T-cell (primary cell): ENCODE measurements at regions of chr17 and their contacts with region 1.

Region 1: DNA sequence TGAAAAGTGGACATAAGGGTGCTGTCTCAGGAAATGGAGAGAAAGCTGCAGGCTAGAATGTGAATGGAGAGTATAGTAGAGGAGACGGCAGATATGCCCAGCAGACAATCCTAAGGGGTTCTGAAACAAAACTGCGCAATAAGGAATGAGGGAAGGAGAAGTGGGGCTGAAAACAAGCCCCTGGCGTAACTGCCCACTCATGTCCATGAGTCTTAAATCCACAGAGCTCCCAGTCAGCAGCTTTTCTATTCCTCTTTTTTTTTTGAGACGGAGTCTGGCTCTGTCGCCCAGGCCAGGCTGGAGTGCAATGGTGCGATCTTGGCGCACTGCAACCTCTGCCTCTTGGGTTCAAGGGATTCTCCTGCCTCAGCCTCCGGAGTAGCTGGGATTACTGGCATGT is 5.9 kb downstream of the STRADA start:
- DNase-seq: no peak
- ATAC-seq: no peak
- H3K4me3 ChIP-seq: no peak overlapping the region
- H3K4me3 Mint-ChIP-seq: no peak overlapping the region
- H3K27ac ChIP-seq: no peak overlapping the region
- H3K27ac Mint-ChIP-seq: peak overlapping the region in 1 of 2 donors; percentile 62
- H3K4me1 ChIP-seq: peaks cover 4 to 10% of the 10 kb centered on the region in 2 experiments
- H3K4me1 Mint-ChIP-seq: peaks cover 13 to 22% (median 18%) of the 10 kb centered on the region in 3 donors
- H3K27me3 ChIP-seq: no peaks in the 10 kb centered on the region
- H3K27me3 Mint-ChIP-seq: no peaks in the 10 kb centered on the region

Region 2: GRCh38 chr17:63751806-63752205 is 16.1 kb after region 1 on chr17:
- CTCF ChIA-PET with region 1: interaction called, 3 to 15 read pairs
- POLR2A ChIA-PET with region 1: interaction called in 1 of 2 experiments, 7 read pairs
- DNase-seq: peak in 19 of 35 experiments; percentile 2 to 56 (median 14)
- ATAC-seq: peak; percentile 70 to 90 (median 80)
- H3K4me3 ChIP-seq: no peak overlapping the region
- H3K4me3 Mint-ChIP-seq: peak overlapping the region in 2 of 3 donors; percentile 25 to 55
- H3K27ac ChIP-seq: peak overlapping the region; percentile 8
- H3K27ac Mint-ChIP-seq: peak overlapping the region; percentile 71 to 72
- H3K4me1 ChIP-seq: peaks cover 0 to 9% of the 10 kb centered on the region in 2 experiments
- H3K4me1 Mint-ChIP-seq: peaks cover 8 to 15% (median 13%) of the 10 kb centered on the region in 3 donors
- H3K27me3 ChIP-seq: no peaks in the 10 kb centered on the region
- H3K27me3 Mint-ChIP-seq: no peaks in the 10 kb centered on the region